Common myeloid progenitor, CD34-positive (primary cell): ENCODE measurements at regions of chr21 and their contacts with region 1.

Region 1: GRCh38 chr21:42537106-42537742 is 23.6 kb downstream of the SLC37A1 start:
- DNase-seq: peak; percentile 63 to 79 (median 76)
- H3K4me3 ChIP-seq: no peak overlapping the region
- H3K27ac ChIP-seq: no peak overlapping the region
- H3K4me1 ChIP-seq: peaks cover 8 to 56% (median 37%) of the 10 kb centered on the region in 4 experiments
- H3K27me3 ChIP-seq: no peaks in the 10 kb centered on the region

Region 2: GRCh38 chr21:42145569-42146272 is 391.5 kb before region 1 on chr21:
- CTCF ChIA-PET with region 1: interaction called, 10 read pairs
- POLR2A ChIA-PET with region 1: no interaction called
- DNase-seq: peak; percentile 68 to 86 (median 82)
- H3K4me3 ChIP-seq: no peak overlapping the region
- H3K27ac ChIP-seq: no peak overlapping the region
- H3K4me1 ChIP-seq: peaks cover 0 to 15% (median 9%) of the 10 kb centered on the region in 4 experiments
- H3K27me3 ChIP-seq: no peaks in the 10 kb centered on the region

Region 3: DNA sequence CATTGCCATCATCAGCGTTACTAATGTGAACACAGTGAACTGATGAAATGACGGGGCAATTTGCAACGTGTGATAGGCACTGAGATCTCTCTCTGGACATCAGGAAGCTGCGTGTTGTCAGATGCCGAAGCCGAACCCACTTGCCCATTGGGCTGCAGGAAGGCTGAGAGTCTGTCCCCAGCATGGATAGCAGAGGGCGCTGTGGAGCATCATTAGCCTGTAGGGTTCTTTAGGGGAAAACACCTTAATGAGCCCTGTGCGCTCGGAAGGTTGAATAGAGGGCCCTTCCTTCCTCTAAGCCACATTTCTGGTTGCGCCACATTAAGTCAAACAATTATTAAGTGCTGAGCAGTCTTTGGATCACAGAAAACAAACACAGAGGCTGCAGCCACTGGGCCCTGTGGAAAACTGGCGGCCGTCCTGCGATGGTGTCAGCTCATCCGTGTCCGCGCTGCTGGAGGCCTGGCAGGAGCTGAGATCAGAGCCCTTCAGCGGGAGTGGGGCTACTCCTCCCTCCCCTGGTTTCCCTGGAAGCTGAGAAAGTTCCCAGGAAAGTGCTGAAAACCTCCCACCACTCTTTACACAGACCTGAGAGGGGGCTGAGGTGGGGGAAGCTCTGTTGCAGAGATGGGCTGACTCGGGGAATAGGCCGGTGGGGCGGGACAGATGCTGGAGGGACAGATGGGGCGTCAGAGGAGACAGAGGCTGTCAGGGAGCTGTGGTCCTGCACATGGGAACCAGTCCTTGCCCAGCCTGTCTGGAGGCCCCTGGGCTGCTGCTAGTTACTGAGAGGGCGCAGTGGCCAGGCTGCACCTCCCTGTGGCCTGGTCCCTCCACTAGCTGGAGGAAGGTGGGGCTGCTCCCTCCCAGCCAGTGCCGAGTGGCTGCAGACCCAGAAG is 199.1 kb before region 1 on chr21:
- CTCF ChIA-PET with region 1: interaction called, 31 read pairs
- POLR2A ChIA-PET with region 1: no interaction called
- DNase-seq: peak; percentile 81 to 94 (median 91)
- H3K4me3 ChIP-seq: peak overlapping the region in 1 of 7 experiments; percentile 28
- H3K27ac ChIP-seq: no peak overlapping the region
- H3K4me1 ChIP-seq: peaks cover 0 to 9% (median 6%) of the 10 kb centered on the region in 4 experiments
- H3K27me3 ChIP-seq: peaks cover 0 to 3% (median 0%) of the 10 kb centered on the region in 5 experiments

Region 4: DNA sequence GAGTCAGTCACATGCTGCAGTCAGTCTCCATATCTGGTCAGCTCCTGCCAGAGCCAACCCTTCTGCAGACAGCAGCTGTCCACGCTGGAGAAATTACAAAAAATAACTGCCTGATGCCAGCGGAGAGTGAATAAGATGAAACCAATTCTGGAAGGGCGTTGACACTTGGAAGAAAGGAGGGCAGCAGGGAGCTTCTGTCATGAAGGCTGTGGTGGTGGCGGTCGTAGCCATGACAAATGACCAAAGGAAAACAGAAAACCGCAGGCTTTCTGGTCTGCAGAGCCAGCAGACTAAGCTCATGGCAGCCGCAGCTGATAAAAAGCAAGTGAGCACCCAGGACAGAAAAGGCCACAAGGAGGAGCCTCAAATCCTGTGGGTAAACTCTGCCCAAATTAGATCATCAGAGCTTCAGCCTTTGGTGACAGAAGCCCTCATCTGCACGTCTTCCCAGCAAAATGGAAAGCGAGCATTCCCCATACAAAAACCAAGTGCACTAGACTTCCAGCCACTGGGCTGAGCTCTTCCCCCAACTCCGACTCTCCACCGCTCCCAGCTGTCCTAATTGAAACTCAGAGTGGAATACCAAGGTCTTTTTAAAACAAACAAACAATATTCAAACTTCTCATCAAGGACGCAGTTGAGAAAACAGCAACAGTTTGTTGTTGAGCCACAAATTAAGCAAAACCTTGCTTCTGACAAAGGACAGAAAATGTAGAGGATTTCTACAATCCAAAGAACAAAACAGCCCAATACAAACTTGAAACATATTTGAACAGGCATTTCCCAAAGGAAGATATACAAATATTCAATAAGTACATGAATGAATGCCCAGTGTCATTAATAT is 69.9 kb before region 1 on chr21:
- CTCF ChIA-PET with region 1: interaction called, 61 read pairs
- POLR2A ChIA-PET with region 1: no interaction called
- DNase-seq: peak; percentile 74 to 86 (median 82)
- H3K4me3 ChIP-seq: peak overlapping the region in 1 of 7 experiments; percentile 25
- H3K27ac ChIP-seq: no peak overlapping the region
- H3K4me1 ChIP-seq: peaks cover 39 to 74% (median 65%) of the 10 kb centered on the region in 4 experiments
- H3K27me3 ChIP-seq: no peaks in the 10 kb centered on the region

Region 5: DNA sequence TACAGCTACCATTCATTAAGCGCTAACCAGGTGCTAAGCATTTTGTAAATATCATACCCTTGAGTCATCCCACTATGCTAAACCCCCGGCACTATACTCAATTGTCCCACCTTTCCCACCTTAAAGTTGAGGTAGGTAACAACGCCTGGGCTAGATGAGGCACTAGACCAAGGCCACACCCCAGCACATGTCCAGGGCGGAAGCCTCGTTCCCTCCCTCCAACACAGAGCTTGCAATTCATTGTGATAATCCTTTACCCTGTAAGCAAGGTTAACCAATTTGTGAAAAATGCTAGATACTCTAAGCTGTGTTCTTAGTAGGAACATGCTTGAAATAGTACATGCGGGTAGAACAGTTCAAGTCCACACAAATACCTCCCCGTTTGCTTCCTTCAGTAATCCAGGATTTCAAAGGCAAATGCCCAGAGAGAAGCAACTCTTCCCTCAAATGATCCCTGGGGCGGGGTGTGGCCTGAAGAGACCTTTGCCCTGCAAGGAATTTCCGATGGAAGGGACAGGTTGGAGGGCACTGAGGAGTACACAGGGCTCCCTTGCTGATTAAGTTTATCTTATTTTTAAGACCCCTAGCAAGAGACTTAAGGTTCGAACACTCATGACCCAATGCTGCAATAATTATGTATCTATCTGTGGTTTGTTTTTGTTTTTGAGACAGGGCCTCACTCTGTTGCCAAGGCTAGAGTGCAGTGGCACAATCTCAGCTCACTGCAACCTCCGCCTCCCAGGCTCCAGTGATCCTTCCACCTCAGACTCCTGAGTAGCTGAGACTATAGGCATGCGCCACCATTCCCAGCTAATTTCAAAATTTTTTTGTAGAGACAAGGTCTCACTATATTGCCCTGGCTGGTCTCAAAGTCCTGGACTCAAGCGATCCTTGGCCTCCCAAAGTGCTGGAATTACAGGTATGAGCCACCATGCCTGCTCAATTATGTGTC is 43.8 kb before region 1 on chr21:
- CTCF ChIA-PET with region 1: interaction called, 12 read pairs
- POLR2A ChIA-PET with region 1: no interaction called
- DNase-seq: no peak
- H3K4me3 ChIP-seq: no peak overlapping the region
- H3K27ac ChIP-seq: no peak overlapping the region
- H3K4me1 ChIP-seq: peaks cover 16 to 63% (median 37%) of the 10 kb centered on the region in 4 experiments
- H3K27me3 ChIP-seq: no peaks in the 10 kb centered on the region